ENCODE measurements at regions of chr21 and their contacts with region 1.

Region 1: DNA sequence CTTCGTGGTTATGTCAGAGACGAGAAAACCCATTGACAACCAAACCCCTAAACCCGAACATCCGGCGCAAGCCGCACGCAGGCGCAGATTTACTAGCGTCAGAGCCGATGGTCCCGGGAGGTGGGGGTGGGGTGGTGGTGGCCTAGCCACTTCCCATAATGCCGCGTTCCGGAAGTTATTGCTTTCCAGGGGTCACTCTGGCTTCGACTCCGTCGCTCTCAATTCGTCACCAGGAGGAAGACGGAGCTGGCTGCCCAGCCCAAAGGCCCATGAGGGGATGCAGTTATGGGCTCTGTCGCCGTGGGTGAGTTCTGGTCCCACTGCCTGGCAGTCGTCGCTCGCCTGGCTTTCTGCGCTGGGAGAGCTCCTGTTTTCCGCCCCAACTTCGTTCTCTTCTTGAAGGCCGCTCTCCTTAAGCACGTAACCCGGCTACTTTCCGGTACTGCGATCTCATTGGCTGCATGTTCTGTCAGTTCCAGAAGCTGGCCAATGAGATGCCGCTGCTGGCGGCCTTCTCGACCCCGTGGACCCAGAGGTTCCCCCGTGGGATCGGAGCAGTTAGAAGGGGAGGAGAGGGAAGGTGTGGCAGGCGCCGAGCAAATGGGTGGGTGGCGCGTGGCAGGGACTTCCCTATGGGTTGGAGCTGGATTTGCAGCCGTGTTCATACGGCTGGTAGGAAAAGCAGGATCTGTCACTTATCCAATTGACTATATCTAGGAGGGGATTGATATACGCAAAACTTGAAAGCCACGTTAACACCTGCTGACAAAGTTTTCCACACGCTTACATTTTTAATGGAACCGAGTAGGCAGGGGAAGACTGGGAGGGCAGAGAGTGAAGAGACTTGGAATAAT is at the start of gene USP16:
- DNase-seq: peak; percentile 92 to 98
- ATAC-seq: peak; percentile 98 to 99 (median 98)
- H3K4me3 ChIP-seq: peak within 1 kb of the TSS; percentile 50 to 88 (median 70)
- H3K27ac ChIP-seq: peak within 1 kb of the TSS; percentile 92 to 100 (median 98)
- H3K4me1 ChIP-seq: peaks cover 0 to 37% (median 25%) of the 10 kb centered on the region in 9 donors
- H3K27me3 ChIP-seq: no peaks in the 10 kb centered on the region
- CTCF ChIP-seq: peak in 5 of 9 donors; percentile 10 to 21 (median 16)
- total RNA-seq, gene USP16: 28.9 to 41.8 (median 33.0) TPM

Region 2: GRCh38 chr21:28961921-28962320 is 62.8 kb before region 1 on chr21:
- intact Hi-C with region 1: no loop called
- DNase-seq: no peak
- ATAC-seq: no peak
- H3K4me3 ChIP-seq: no peak overlapping the region
- H3K27ac ChIP-seq: no peak overlapping the region
- H3K4me1 ChIP-seq: peaks cover 0 to 8% (median 0%) of the 10 kb centered on the region in 9 donors
- H3K27me3 ChIP-seq: no peaks in the 10 kb centered on the region
- CTCF ChIP-seq: no peak

Region 3: DNA sequence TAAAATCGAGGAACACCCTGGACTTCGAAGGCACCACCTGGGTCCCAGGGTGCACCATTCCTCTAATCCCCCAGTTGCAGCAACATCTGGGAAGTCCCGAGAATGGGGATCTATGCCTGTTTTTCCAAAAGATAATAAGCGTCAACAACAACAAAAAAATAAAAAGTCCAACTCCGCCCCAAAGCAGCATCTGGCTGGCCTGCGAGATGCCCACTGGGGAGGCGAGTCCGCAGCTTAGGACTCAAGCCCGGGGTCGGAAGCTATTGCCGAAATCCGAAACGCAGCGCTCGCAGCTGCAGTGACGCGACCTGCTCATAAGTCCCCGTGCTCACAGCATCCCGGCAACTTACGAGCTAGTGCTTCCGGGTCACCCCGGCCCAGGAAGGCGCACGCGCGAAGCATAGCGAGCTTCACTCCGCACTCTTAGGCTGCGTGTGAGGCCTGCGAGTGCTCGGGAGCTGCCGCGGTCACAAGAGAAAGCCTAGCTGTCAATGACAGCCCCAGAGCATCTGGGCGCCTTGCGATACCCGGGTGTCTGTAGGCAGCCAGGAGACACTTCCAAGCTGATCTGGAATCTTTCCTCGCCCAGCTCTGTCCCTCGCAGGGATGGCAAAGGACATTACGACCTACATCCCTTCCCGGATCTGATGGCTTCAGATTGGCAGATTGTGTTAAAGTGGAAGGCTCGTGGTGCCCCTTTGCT is 22.1 kb before region 1 on chr21:
- intact Hi-C with region 1: loop called in 3 of 10 experiments (anchors 1 to 2 kb)
- DNase-seq: peak; percentile 94 to 96
- ATAC-seq: peak; percentile 99 to 100 (median 100)
- H3K4me3 ChIP-seq: peak overlapping the region; percentile 43 to 74 (median 67)
- H3K27ac ChIP-seq: peak overlapping the region; percentile 76 to 97 (median 96)
- H3K4me1 ChIP-seq: peaks cover 0 to 19% (median 9%) of the 10 kb centered on the region in 9 donors
- H3K27me3 ChIP-seq: no peaks in the 10 kb centered on the region
- CTCF ChIP-seq: no peak

Region 4: GRCh38 chr21:29056005-29056404 is 31.3 kb after region 1 on chr21:
- intact Hi-C with region 1: no loop called
- DNase-seq: no peak
- ATAC-seq: no peak
- H3K4me3 ChIP-seq: no peak overlapping the region
- H3K27ac ChIP-seq: no peak overlapping the region
- H3K4me1 ChIP-seq: no peaks in the 10 kb centered on the region
- H3K27me3 ChIP-seq: no peaks in the 10 kb centered on the region
- CTCF ChIP-seq: no peak

Region 5: GRCh38 chr21:29073222-29074006 is 48.7 kb after region 1 on chr21 and contains the start of gene CCT8:
- intact Hi-C with region 1: loop called in 5 of 10 experiments (anchors 1 to 5 kb)
- DNase-seq: peak; percentile 99 to 100
- ATAC-seq: peak; percentile 97 to 99 (median 98)
- H3K4me3 ChIP-seq: peak within 1 kb of the TSS; percentile 64 to 99 (median 84)
- H3K27ac ChIP-seq: peak within 1 kb of the TSS; percentile 65 to 96 (median 90)
- H3K4me1 ChIP-seq: peaks cover 2 to 49% (median 30%) of the 10 kb centered on the region in 9 donors
- H3K27me3 ChIP-seq: no peaks in the 10 kb centered on the region
- CTCF ChIP-seq: no peak
- total RNA-seq, gene CCT8: 90.0 to 126 (median 112) TPM

Measured in heart right ventricle (tissue), 16 donors.